Lower leg skin (tissue), 4 donors: ENCODE measurements at regions of chr10 and their contacts with region 1.

Region 1: DNA sequence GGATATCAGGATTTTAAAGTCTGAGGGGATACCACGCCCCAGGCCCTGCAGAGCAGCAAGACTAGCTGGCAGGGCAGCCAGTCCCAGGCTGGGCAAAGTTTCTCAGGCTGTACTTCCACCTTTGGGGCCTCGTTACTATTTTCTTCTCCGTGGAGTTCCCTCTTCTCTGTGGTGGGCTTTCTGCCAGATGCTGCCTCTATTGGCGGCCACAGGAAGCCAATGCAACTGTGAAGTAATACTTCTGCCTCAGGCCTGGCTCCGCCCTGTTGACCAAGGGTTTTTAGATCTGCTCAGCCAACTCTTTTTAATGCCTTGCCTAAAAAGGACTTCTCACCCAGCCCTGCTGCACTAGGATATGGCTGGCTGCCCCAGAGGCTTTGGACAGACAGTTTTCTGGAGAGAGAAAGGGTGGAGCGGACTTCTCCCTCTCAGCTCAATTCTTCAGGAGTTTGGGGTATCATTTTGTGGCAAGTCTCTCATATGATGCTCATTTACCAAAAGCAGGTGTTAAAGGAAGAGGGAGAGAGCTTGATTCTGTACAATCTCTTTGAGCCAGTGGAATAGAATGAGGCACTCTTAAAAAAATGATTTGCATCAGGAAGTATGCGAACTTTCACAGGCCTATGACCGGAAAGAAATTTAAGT is 67.4 kb downstream of the HHEX start:
- DNase-seq: peak; percentile 78 to 90
- H3K4me3 ChIP-seq: no peak overlapping the region
- CTCF ChIP-seq: no peak
- POLR2A ChIP-seq: no peak

Region 2: GRCh38 chr10:92695679-92696605 is 61.2 kb before region 1 on chr10:
- intact Hi-C with region 1: loop called (anchors 2 kb)
- DNase-seq: no peak
- H3K4me3 ChIP-seq: no peak overlapping the region
- CTCF ChIP-seq: no peak
- POLR2A ChIP-seq: no peak